ENCODE measurements at regions of chr12 and their contacts with region 1.

Region 1: DNA sequence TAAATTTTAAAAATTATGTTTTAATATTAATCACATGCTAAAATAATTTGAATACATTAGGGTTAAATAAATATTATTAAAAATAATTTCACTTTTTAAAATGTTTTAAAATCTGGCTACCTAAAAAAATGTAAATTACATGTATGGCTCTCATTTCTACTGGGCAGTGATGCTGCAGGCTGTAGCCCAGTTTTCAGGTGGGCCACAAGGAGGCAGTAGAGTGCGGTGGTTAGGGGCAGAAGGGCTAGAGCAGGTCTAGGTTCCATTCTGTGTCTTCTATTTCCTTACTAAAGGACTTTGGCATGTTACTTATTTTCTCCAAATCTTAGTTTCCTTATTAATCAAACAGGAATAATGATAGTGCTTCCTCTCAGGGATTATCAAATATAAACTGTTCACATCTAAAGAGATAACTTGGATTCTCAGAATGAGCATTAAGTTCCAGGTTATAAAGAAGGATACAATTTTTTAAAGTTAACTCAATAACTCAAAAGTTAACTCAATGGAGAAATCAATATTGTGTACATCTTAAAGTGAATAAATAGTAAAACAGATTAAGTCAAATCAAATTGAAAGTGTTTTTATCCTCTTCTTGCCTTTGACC is 54.9 kb upstream of the OVCH1 start:
- DNase-seq: peak; percentile 70
- H3K4me3 ChIP-seq: no peak overlapping the region
- H3K27ac ChIP-seq: no peak overlapping the region
- H3K4me1 ChIP-seq: no peaks in the 10 kb centered on the region
- H3K27me3 ChIP-seq: no peaks in the 10 kb centered on the region
- CTCF ChIP-seq: peak; percentile 90

Region 2: GRCh38 chr12:29492891-29493290 is 59.5 kb before region 1 on chr12:
- intact Hi-C with region 1: no loop called
- DNase-seq: no peak
- H3K4me3 ChIP-seq: no peak overlapping the region
- H3K27ac ChIP-seq: no peak overlapping the region
- H3K4me1 ChIP-seq: no peaks in the 10 kb centered on the region
- H3K27me3 ChIP-seq: no peaks in the 10 kb centered on the region
- CTCF ChIP-seq: no peak

Region 3: GRCh38 chr12:29807125-29807524 is 254.7 kb after region 1 on chr12:
- intact Hi-C with region 1: no loop called
- DNase-seq: no peak
- H3K4me3 ChIP-seq: no peak overlapping the region
- H3K27ac ChIP-seq: no peak overlapping the region
- H3K4me1 ChIP-seq: no peaks in the 10 kb centered on the region
- H3K27me3 ChIP-seq: no peaks in the 10 kb centered on the region
- CTCF ChIP-seq: no peak

Region 4: DNA sequence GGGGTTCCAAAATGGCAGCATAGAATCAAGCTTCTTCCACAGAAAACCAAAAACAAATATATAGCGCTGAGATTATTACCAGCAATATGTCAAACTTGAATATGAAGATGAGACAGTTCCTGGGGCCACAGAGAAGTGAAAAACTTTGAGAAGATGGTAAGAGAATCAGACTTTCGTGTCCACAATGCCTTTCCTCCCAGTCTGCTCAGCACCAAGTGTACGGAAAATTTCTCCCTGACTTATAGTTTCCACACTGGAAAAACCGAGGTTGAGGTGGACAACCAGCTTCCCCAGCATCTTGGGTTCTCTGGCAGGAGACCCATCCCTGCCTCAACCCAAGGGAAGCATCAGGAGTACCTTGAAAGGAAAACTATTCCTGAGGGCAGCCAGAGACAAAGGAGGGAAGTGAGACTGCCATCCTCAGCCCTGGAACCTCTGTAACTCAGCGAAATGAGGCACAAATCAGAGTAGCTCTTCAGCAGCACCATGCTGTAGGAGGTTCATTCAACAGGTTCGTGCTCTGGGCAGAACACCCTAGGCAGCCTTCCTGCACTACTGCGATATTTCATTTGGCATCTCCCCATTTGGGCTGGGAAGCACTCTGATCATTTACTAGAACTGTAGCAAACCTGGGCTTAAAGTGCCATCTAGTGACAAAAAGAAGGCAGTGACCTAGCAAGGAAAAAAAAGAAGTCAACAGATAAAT is 1254.7 kb after region 1 on chr12:
- intact Hi-C with region 1: loop called (anchors 5 kb)
- DNase-seq: peak; percentile 35
- H3K4me3 ChIP-seq: no peak overlapping the region
- H3K27ac ChIP-seq: no peak overlapping the region
- H3K4me1 ChIP-seq: no peaks in the 10 kb centered on the region
- H3K27me3 ChIP-seq: no peaks in the 10 kb centered on the region
- CTCF ChIP-seq: peak; percentile 68

Measured in colonic mucosa (tissue), 4 donors.